ENCODE measurements at regions of chr19 and their contacts with region 1.

Region 1: DNA sequence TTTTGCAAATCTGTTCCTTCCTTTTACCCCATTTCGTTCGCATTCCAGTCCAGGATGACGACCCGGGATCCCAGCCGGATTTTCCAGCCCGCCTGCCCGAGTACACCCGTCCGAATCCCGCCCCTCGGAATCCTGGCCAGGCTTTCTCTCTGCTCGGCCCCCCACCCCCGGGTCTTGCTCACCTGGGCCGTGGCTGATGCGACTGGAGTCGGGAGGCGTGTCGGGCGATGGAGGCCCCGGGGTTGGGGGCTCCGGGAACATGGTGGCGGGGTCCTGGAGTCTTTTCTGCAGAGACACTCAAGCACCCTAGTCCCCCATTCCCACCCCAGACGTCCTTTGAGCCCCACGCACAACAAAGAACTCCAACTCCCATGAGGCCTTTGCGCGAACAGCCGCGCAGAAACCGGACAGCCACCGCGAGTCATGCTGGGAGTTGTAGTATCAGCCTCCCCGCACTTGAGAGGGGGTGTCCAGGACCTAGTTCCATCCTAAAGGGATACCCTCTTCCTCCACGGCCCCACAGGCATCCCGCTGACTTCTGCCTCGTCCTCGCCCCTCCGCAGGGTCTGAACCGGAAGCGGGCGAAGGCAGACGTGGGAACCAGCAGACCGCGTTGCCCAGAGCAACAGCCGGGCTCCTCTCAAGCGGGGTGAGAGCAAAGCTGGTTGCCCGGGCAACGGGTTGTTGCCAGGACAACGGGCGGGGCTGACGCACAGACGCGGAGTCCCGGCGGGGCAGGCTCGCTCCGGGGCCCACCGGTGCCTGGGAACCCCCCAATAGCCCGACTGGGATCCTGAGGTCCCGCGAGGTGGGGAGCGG is 1.1 kb downstream of the SYT5 start:
- DNase-seq: peak; percentile 87 to 99 (median 96)
- ATAC-seq: peak; percentile 79
- H3K4me3 ChIP-seq: peak overlapping the region; percentile 39 to 44
- H3K4me3 Mint-ChIP-seq: peak overlapping the region; percentile 75
- H3K27ac ChIP-seq: peak overlapping the region; percentile 45 to 61
- H3K27ac Mint-ChIP-seq: peak overlapping the region; percentile 79
- H3K4me1 ChIP-seq: peaks cover 27% of the 10 kb centered on the region
- H3K4me1 Mint-ChIP-seq: peaks cover 23% of the 10 kb centered on the region
- H3K27me3 ChIP-seq: peaks cover 43 to 67% of the 10 kb centered on the region in 2 experiments
- H3K27me3 Mint-ChIP-seq: peaks cover 68% of the 10 kb centered on the region
- CTCF ChIP-seq: no peak

Region 2: GRCh38 chr19:55005684-55006488 is 173.1 kb before region 1 on chr19:
- CTCF ChIA-PET with region 1: no interaction called
- POLR2A ChIA-PET with region 1: interaction called, 3 read pairs
- intact Hi-C with region 1: loop called in 1 of 2 experiments (anchors 5 kb)
- DNase-seq: peak; percentile 4 to 95 (median 54)
- ATAC-seq: peak; percentile 90
- H3K4me3 ChIP-seq: peak overlapping the region; percentile 52 to 53
- H3K4me3 Mint-ChIP-seq: peak overlapping the region; percentile 71
- H3K27ac ChIP-seq: peak overlapping the region; percentile 66 to 90
- H3K27ac Mint-ChIP-seq: peak overlapping the region; percentile 87
- H3K4me1 ChIP-seq: peaks cover 17% of the 10 kb centered on the region
- H3K4me1 Mint-ChIP-seq: peaks cover 24% of the 10 kb centered on the region
- H3K27me3 ChIP-seq: peaks cover 0 to 2% of the 10 kb centered on the region in 2 experiments
- H3K27me3 Mint-ChIP-seq: peaks cover 25% of the 10 kb centered on the region
- CTCF ChIP-seq: no peak

Region 3: GRCh38 chr19:55216461-55217198 is 37.6 kb after region 1 on chr19:
- CTCF ChIA-PET with region 1: interaction called, 3 read pairs
- POLR2A ChIA-PET with region 1: no interaction called
- intact Hi-C with region 1: loop called in 1 of 2 experiments (anchors 5 kb)
- DNase-seq: peak in 8 of 9 experiments; percentile 15 to 59 (median 44)
- ATAC-seq: peak; percentile 56
- H3K4me3 ChIP-seq: no peak overlapping the region
- H3K4me3 Mint-ChIP-seq: no peak overlapping the region
- H3K27ac ChIP-seq: no peak overlapping the region
- H3K27ac Mint-ChIP-seq: no peak overlapping the region
- H3K4me1 ChIP-seq: peaks cover 12% of the 10 kb centered on the region
- H3K4me1 Mint-ChIP-seq: peaks cover 12% of the 10 kb centered on the region
- H3K27me3 ChIP-seq: no peaks in the 10 kb centered on the region
- H3K27me3 Mint-ChIP-seq: peaks cover 12% of the 10 kb centered on the region
- CTCF ChIP-seq: no peak

Region 4: DNA sequence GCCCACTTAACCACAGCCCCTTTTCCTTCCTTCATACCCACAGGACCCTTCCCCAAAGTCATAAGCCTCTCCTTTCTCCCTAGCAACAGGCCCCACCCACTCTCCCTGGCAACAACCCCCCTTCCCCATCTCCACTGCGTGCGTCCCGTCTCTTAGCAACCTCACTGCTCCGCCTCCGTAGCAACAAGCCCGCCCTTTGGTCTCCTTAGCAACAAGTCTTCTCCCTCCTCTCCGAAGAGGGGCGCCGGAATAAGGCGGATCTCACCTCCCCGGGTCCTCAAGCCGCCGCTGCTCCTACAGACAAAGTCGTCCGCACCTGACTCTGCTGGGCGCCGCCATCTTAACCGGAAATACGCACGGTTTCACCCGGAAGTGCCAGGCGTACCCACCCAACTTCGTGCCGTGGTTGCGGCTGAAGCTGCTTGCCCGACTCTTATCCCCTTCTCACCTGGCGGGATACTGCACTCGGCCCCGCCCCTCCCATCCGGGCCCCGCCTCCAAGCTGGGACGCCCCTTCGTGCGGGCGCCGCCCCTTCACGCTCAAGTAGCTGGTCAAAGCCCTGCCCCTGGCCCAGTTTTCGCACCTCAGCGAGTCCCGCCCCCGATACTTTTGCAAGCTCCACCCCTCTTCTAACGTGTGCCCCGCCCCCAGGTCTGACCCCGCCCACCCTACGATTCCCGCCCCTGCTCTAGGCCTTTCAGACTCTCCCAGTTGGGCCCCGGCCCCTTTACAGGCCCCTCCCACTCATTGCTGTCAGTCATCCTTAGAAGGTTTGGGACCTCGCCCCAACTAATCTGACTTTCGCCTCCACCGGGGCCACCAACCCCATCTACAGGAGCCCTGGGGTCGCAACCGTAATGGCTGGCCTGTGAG is 101.0 kb after region 1 on chr19 and contains the start of gene HSPBP1:
- CTCF ChIA-PET with region 1: no interaction called
- POLR2A ChIA-PET with region 1: no interaction called
- intact Hi-C with region 1: loop called (anchors 1 kb)
- DNase-seq: peak; percentile 87 to 98 (median 95)
- ATAC-seq: peak; percentile 86
- H3K4me3 ChIP-seq: peak within 1 kb of the TSS; percentile 73 to 85
- H3K4me3 Mint-ChIP-seq: peak within 1 kb of the TSS; percentile 96
- H3K27ac ChIP-seq: peak within 1 kb of the TSS; percentile 89 to 90
- H3K27ac Mint-ChIP-seq: peak within 1 kb of the TSS; percentile 98
- H3K4me1 ChIP-seq: peaks cover 32% of the 10 kb centered on the region
- H3K4me1 Mint-ChIP-seq: peaks cover 44% of the 10 kb centered on the region
- H3K27me3 ChIP-seq: no peaks in the 10 kb centered on the region
- H3K27me3 Mint-ChIP-seq: no peaks in the 10 kb centered on the region
- CTCF ChIP-seq: no peak
- total RNA-seq, gene HSPBP1: 18.8 to 18.9 TPM

Region 5: GRCh38 chr19:55643348-55644176 is 464.6 kb after region 1 on chr19 and contains the start of gene ZNF581:
- CTCF ChIA-PET with region 1: no interaction called
- POLR2A ChIA-PET with region 1: no interaction called
- intact Hi-C with region 1: no loop called
- DNase-seq: peak; percentile 53 to 91 (median 77)
- ATAC-seq: peak; percentile 55
- H3K4me3 ChIP-seq: peak within 1 kb of the TSS; percentile 66 to 73
- H3K4me3 Mint-ChIP-seq: peak within 1 kb of the TSS; percentile 95
- H3K27ac ChIP-seq: peak within 1 kb of the TSS; percentile 65 to 79
- H3K27ac Mint-ChIP-seq: peak within 1 kb of the TSS; percentile 97
- H3K4me1 ChIP-seq: peaks cover 42% of the 10 kb centered on the region
- H3K4me1 Mint-ChIP-seq: peaks cover 55% of the 10 kb centered on the region
- H3K27me3 ChIP-seq: no peaks in the 10 kb centered on the region
- H3K27me3 Mint-ChIP-seq: no peaks in the 10 kb centered on the region
- CTCF ChIP-seq: no peak
- total RNA-seq, gene ZNF581: 25.6 to 25.7 TPM